Caco-2 (cell line): ENCODE measurements at regions of chr3 and their contacts with region 1.

Region 1: GRCh38 chr3:186464424-186465093 is 79.6 kb downstream of the CRYGS start:
- DNase-seq: no peak
- H3K4me3 ChIP-seq: no peak overlapping the region
- H3K4me3 Mint-ChIP-seq: no peak overlapping the region
- H3K27ac Mint-ChIP-seq: no peak overlapping the region
- H3K4me1 ChIP-seq: peaks cover 8% of the 10 kb centered on the region; the same call in 1 of the 2 replicates
- H3K4me1 Mint-ChIP-seq: peaks cover 22% of the 10 kb centered on the region
- H3K27me3 ChIP-seq: no peaks in the 10 kb centered on the region
- H3K27me3 Mint-ChIP-seq: peaks cover 4% of the 10 kb centered on the region
- CTCF ChIP-seq: peak in 1 of 2 experiments; percentile 25

Region 2: GRCh38 chr3:186476044-186476468 is 11.5 kb after region 1 on chr3:
- CTCF ChIA-PET with region 1: no interaction called
- POLR2A ChIA-PET with region 1: no interaction called
- intact Hi-C with region 1: no loop called
- DNase-seq: no peak
- H3K4me3 ChIP-seq: no peak overlapping the region
- H3K4me3 Mint-ChIP-seq: no peak overlapping the region
- H3K27ac Mint-ChIP-seq: no peak overlapping the region
- H3K4me1 ChIP-seq: peaks cover 10% of the 10 kb centered on the region; the same call in 1 of the 2 replicates
- H3K4me1 Mint-ChIP-seq: peaks cover 12% of the 10 kb centered on the region
- H3K27me3 ChIP-seq: no peaks in the 10 kb centered on the region
- H3K27me3 Mint-ChIP-seq: peaks cover 4% of the 10 kb centered on the region
- CTCF ChIP-seq: no peak

Region 3: DNA sequence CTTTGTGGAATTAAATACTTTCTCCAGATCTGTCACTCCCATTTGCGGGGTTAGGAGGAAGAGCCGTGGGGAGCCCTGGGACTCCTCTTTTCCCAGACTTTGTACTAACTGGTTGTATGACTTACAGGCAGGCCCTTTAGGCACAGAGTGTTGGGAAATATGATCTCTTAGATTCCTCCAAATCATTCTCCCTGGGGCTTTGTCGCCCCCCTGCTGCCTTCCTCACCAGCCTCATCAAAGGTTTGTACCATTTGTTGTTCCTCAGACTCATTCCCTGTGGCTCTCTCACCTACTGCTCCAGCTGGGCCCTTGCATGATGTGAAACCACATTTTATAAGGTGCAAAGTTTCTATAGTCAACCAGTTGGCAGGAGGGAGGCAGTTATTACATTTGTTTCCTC is 23.3 kb after region 1 on chr3:
- CTCF ChIA-PET with region 1: no interaction called
- POLR2A ChIA-PET with region 1: no interaction called
- intact Hi-C with region 1: no loop called
- DNase-seq: no peak
- H3K4me3 ChIP-seq: no peak overlapping the region
- H3K4me3 Mint-ChIP-seq: no peak overlapping the region
- H3K27ac Mint-ChIP-seq: no peak overlapping the region
- H3K4me1 ChIP-seq: 0 out of 2 replicates have a peak, but pooled peaks cover 4% of the 10 kb centered on the region
- H3K4me1 Mint-ChIP-seq: peaks cover 13% of the 10 kb centered on the region
- H3K27me3 ChIP-seq: no peaks in the 10 kb centered on the region
- H3K27me3 Mint-ChIP-seq: no peaks in the 10 kb centered on the region
- CTCF ChIP-seq: no peak

Region 4: DNA sequence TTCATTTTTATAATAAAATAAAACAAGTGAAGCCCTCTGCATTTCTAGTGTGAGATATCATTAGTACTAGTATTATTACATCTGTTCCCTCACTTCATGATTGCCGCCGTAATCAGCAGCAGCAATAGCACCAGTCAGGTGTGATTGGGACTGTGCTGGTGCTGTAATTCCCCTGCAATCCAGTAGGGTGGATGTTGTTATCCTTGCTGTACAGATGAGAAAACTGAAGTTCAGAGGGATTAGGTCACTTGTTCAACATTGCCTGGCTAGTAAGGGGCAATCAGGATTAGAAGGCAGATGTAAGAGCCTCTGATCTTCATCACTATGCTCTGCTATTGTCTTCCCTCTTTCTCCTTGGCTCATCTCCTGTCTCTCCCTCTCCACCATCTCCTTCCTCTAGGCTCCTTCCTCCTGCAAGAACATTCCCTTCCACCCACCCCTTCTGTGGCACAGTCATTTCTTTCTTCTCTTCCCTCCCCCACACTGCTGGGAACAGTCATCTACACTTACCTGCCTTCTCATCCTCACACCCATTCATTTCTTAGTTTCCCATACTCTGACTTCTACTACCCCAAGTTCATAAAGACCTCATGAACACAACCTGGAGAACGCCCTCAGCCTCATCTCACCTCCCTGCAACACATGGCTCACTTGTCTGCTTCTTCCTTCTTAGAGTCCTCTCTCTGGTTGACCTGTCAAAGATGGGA is 49.9 kb after region 1 on chr3:
- CTCF ChIA-PET with region 1: no interaction called
- POLR2A ChIA-PET with region 1: no interaction called
- intact Hi-C with region 1: loop called (anchors 5 kb)
- DNase-seq: peak in 1 of 2 experiments; percentile 38
- H3K4me3 ChIP-seq: no peak overlapping the region
- H3K4me3 Mint-ChIP-seq: no peak overlapping the region
- H3K27ac Mint-ChIP-seq: no peak overlapping the region
- H3K4me1 ChIP-seq: peaks cover 10% of the 10 kb centered on the region; the same call in 1 of the 2 replicates
- H3K4me1 Mint-ChIP-seq: peaks cover 13% of the 10 kb centered on the region
- H3K27me3 ChIP-seq: no peaks in the 10 kb centered on the region
- H3K27me3 Mint-ChIP-seq: peaks cover 2% of the 10 kb centered on the region
- CTCF ChIP-seq: peak; percentile 25 to 49

Region 5: DNA sequence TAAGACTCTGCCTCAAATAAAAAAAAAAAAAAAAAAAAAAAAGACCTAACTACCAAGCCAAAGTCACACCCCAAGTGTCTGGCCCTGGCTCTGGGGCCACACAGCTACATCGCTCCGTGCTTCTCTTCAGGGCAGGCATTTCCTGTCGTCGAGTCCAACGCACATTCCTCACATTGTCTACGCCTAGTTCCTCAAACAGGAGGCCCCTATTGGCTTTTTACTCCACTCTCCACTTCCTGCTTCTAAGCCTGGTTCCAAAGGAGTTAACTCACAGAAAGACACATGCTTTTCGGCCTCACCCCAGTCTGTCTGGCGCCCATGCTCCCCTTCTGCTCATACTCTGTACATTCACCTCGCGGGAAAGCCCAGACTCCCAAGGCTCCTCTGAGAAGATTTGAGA is 281.4 kb after region 1 on chr3:
- CTCF ChIA-PET with region 1: no interaction called
- POLR2A ChIA-PET with region 1: no interaction called
- intact Hi-C with region 1: no loop called
- DNase-seq: peak; percentile 88 to 93
- H3K4me3 ChIP-seq: no peak overlapping the region
- H3K4me3 Mint-ChIP-seq: peak overlapping the region; percentile 62
- H3K27ac Mint-ChIP-seq: peak overlapping the region; percentile 95
- H3K4me1 ChIP-seq: peaks cover 50% of the 10 kb centered on the region
- H3K4me1 Mint-ChIP-seq: peaks cover 44% of the 10 kb centered on the region
- H3K27me3 ChIP-seq: no peaks in the 10 kb centered on the region
- H3K27me3 Mint-ChIP-seq: no peaks in the 10 kb centered on the region
- CTCF ChIP-seq: no peak